ENCODE measurements at regions of chr22 and their contacts with region 1.

Region 1: DNA sequence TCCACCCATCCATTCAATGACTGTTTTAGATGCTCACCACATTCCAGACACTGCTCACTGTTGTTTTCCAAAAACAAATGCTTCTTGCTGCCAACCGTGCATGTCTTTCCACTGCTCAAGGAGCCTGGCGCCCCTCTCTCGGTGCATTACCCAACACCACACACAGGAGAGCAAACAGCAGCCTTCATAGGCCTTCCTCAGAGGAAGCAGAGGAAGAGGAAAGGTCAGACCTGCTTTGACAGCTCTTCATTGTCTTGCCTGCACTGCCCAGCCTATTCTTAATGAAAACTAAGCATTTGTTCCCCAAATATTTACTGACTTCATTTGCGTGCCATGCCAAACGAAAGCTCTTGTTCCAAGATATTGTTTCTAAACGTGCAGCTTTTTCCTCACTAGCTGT is 1129.2 kb downstream of the TBC1D22A start:
- DNase-seq: no peak
- H3K4me3 ChIP-seq: no peak overlapping the region
- H3K27ac ChIP-seq: no peak overlapping the region
- H3K4me1 ChIP-seq: no peaks in the 10 kb centered on the region
- H3K27me3 ChIP-seq: no peaks in the 10 kb centered on the region
- CTCF ChIP-seq: no peak
- POLR2A ChIP-seq: no peak

Region 2: DNA sequence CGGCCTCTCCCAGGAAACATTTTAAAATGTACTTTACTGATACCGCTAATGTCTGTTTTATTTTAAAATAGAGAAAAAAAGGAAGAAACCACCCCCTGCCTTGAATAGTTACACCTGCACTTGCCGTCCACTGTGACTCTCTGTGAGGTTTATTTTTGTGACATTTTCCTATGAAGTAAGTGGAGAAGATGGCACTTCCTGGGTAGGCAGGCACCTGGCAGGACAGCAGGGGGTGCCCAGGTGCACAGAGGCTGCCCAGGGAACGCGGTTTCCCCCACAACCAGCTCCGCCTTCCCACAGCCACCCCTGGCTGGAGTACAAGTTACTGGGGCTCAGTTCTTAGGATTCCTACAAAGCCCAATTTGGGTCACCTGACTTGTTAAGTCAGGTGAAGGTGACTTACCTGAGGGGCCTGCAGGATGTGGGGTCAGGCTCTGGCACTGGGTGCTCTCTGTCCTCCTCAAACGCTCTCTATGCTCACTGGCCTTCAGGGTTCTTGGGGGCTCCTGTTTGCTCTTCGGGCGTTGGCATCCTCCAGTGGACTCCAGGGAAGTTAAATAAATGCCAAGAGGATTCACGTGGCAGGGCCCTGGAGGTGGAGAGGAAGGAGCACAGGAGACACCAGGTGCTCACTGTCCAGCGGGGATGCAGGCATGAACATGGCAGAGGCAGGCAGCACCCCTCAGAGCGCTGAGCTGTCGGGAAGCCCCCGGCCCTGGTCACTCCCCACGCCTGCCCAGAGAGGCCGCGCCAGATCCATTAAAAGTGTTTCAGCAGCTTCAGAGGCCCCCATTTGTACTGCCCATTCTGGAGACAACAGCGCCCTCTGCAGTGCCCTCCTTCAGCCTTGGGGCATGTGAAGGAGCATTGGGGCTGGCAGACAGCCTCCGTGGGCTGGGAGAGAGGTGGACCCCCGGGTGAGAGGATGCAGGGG is 107.9 kb before region 1 on chr22:
- intact Hi-C with region 1: no loop called
- DNase-seq: peak; percentile 70 to 87
- H3K4me3 ChIP-seq: no peak overlapping the region
- H3K27ac ChIP-seq: no peak overlapping the region
- H3K4me1 ChIP-seq: no peaks in the 10 kb centered on the region
- H3K27me3 ChIP-seq: no peaks in the 10 kb centered on the region
- CTCF ChIP-seq: no peak
- POLR2A ChIP-seq: no peak

Region 3: GRCh38 chr22:47914481-47915097 is 23.0 kb after region 1 on chr22:
- intact Hi-C with region 1: loop called (anchors 2 kb)
- DNase-seq: no peak
- H3K4me3 ChIP-seq: no peak overlapping the region
- H3K27ac ChIP-seq: no peak overlapping the region
- H3K4me1 ChIP-seq: no peaks in the 10 kb centered on the region
- H3K27me3 ChIP-seq: no peaks in the 10 kb centered on the region
- CTCF ChIP-seq: no peak
- POLR2A ChIP-seq: no peak

Region 4: DNA sequence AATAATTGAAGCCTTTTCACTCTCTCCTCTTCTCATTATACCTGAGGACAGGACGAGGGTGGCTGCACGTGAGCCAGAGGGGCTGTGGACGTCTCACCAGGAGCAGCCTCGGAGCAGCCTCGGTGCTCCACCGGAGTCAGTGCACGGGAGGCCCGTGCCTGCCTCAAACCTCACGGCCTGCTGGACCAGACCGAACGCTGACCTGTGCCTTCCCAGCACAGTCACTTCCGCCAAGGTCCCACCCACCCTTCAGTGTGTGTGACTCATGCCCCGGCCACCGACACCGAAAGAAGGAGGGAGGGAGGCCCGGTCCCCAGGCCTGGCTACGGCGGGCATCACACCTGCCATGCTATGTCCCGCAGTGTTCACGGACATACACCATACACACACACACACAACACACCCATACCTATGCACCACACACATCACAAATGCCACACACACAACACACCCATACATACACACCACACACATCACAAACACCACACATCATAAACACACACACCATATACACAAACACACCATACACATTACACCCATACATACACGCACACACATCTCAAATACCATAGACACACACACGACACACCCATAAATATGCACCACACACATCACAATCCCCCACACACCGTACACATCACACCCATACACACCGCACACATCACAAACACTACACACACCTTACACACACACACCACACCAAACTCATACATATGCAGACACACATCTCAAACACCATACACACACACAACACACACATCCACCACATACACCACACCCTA is 377.4 kb after region 1 on chr22:
- intact Hi-C with region 1: no loop called
- DNase-seq: no peak
- H3K4me3 ChIP-seq: no peak overlapping the region
- H3K27ac ChIP-seq: no peak overlapping the region
- H3K4me1 ChIP-seq: no peaks in the 10 kb centered on the region
- H3K27me3 ChIP-seq: no peaks in the 10 kb centered on the region
- CTCF ChIP-seq: no peak
- POLR2A ChIP-seq: no peak

Measured in vagina (tissue), 2 donors.